CD8-positive, alpha-beta T cell (primary cell): ENCODE measurements at regions of chr15 and their contacts with region 1.

Region 1: GRCh38 chr15:33872416-33873106 is 95.7 kb upstream of the CHRM5 start:
- DNase-seq: no peak
- ATAC-seq: no peak
- H3K4me3 ChIP-seq: no peak overlapping the region
- H3K4me3 Mint-ChIP-seq: no peak overlapping the region
- H3K27ac ChIP-seq: no peak overlapping the region
- H3K27ac Mint-ChIP-seq: no peak overlapping the region
- H3K4me1 ChIP-seq: no peaks in the 10 kb centered on the region
- H3K4me1 Mint-ChIP-seq: no peaks in the 10 kb centered on the region
- H3K27me3 ChIP-seq: no peaks in the 10 kb centered on the region
- H3K27me3 Mint-ChIP-seq: no peaks in the 10 kb centered on the region
- CTCF ChIP-seq: no peak

Region 2: GRCh38 chr15:33476076-33476475 is 396.5 kb before region 1 on chr15:
- CTCF ChIA-PET with region 1: no interaction called
- POLR2A ChIA-PET with region 1: no interaction called
- intact Hi-C with region 1: no loop called
- DNase-seq: no peak
- ATAC-seq: no peak
- H3K4me3 ChIP-seq: no peak overlapping the region
- H3K4me3 Mint-ChIP-seq: no peak overlapping the region
- H3K27ac ChIP-seq: no peak overlapping the region
- H3K27ac Mint-ChIP-seq: no peak overlapping the region
- H3K4me1 ChIP-seq: no peaks in the 10 kb centered on the region
- H3K4me1 Mint-ChIP-seq: no peaks in the 10 kb centered on the region
- H3K27me3 ChIP-seq: no peaks in the 10 kb centered on the region
- H3K27me3 Mint-ChIP-seq: peaks cover 3% of the 10 kb centered on the region
- CTCF ChIP-seq: no peak

Region 3: GRCh38 chr15:33860754-33861153 is 11.8 kb before region 1 on chr15:
- CTCF ChIA-PET with region 1: no interaction called
- POLR2A ChIA-PET with region 1: no interaction called
- intact Hi-C with region 1: no loop called
- DNase-seq: no peak
- ATAC-seq: no peak
- H3K4me3 ChIP-seq: no peak overlapping the region
- H3K4me3 Mint-ChIP-seq: no peak overlapping the region
- H3K27ac ChIP-seq: no peak overlapping the region
- H3K27ac Mint-ChIP-seq: no peak overlapping the region
- H3K4me1 ChIP-seq: no peaks in the 10 kb centered on the region
- H3K4me1 Mint-ChIP-seq: no peaks in the 10 kb centered on the region
- H3K27me3 ChIP-seq: no peaks in the 10 kb centered on the region
- H3K27me3 Mint-ChIP-seq: no peaks in the 10 kb centered on the region
- CTCF ChIP-seq: no peak

Region 4: GRCh38 chr15:34753236-34753894 is 880.8 kb after region 1 on chr15:
- CTCF ChIA-PET with region 1: no interaction called
- POLR2A ChIA-PET with region 1: no interaction called
- intact Hi-C with region 1: loop called in 1 of 2 experiments (anchors 5 kb)
- DNase-seq: no peak
- ATAC-seq: no peak
- H3K4me3 ChIP-seq: no peak overlapping the region
- H3K4me3 Mint-ChIP-seq: no peak overlapping the region
- H3K27ac ChIP-seq: no peak overlapping the region
- H3K27ac Mint-ChIP-seq: no peak overlapping the region
- H3K4me1 ChIP-seq: no peaks in the 10 kb centered on the region
- H3K4me1 Mint-ChIP-seq: peaks cover 6% of the 10 kb centered on the region
- H3K27me3 ChIP-seq: peaks cover 5 to 11% of the 10 kb centered on the region in 2 experiments
- H3K27me3 Mint-ChIP-seq: peaks cover 59% of the 10 kb centered on the region
- CTCF ChIP-seq: no peak